IMR-90 (cell line): ENCODE measurements at regions of chr5 and their contacts with region 1.

Region 1: DNA sequence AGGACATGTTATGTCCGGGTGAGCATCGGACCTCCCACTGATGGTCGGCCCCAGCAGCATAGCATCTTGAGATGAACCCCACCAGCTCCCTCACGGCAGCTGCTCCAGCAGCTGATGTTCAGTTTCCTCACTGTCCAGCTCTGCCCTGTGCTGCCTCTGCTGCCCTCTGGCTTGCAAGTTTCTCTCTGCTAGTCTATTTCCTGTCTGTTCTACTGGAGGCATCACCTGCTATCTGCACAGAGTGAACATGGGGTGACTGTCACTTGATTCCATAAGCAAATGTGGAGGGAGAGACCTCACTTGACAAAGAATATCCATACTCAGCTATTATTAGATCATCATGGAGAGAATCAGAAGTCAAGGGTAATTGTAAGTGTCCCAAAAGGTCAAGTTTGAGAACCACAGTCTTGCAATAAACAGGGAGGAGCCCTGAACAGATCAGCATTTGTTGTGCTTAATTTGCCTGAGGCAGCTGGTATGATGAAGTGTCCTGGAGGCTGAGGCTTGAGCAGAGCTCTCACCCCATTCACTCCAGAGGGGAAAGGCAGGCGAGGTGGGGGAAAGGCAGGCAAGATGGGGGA is 702.8 kb downstream of the SEMA5A start:
- DNase-seq: peak; percentile 60
- ATAC-seq: peak; percentile 73
- H3K4me3 ChIP-seq: no peak overlapping the region
- H3K27ac ChIP-seq: peak overlapping the region; percentile 31; the same call in 1 of the 2 replicates
- H3K4me1 ChIP-seq: peaks cover 18% of the 10 kb centered on the region
- H3K27me3 ChIP-seq: no peaks in the 10 kb centered on the region
- CTCF ChIP-seq: peak; percentile 61
- POLR2A ChIP-seq: no peak
- RAD21 ChIP-seq: peak; percentile 63

Region 2: GRCh38 chr5:7927466-7928375 is 915.3 kb before region 1 on chr5:
- CTCF ChIA-PET with region 1: no interaction called
- POLR2A ChIA-PET with region 1: no interaction called
- dilution Hi-C with region 1: no loop called
- in situ Hi-C with region 1: no loop called
- intact Hi-C with region 1: loop called (anchors 10 kb)
- DNase-seq: peak; percentile 64
- ATAC-seq: peak; percentile 71
- H3K4me3 ChIP-seq: no peak overlapping the region
- H3K27ac ChIP-seq: no peak overlapping the region
- H3K4me1 ChIP-seq: peaks cover 2% of the 10 kb centered on the region
- H3K27me3 ChIP-seq: no peaks in the 10 kb centered on the region
- CTCF ChIP-seq: peak; percentile 74
- POLR2A ChIP-seq: 0 out of 2 replicates have a peak, but pooled peaks have one; percentile 41
- RAD21 ChIP-seq: peak; percentile 86

Region 3: DNA sequence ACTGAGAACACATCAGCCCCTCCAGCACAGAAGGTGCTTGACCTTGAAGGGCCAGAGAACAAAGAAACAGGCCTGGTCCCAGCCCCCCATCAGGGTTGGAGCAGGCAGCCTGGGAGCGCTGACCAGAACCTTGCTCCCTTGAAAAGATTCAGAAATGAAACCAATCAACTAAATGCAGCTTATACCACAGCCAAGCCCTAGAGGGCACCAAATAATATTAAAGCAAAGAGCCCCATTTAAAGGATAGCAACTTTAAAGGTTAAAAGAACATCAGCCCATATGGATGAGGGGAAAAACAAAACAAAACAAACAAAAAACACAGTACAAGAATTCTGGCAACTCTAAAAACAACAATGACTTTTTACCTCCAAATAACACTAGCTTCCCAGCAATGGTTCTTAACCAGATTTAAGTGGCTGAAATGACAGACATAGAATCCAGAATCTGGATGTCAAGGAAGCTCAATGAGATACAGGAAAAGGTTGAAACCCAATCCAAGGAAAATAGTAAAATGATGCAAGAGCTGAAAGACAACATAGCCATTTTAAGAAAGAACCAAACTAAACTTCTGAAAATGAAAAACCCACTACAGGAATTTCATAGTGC is 502.2 kb before region 1 on chr5:
- CTCF ChIA-PET with region 1: no interaction called
- POLR2A ChIA-PET with region 1: no interaction called
- dilution Hi-C with region 1: no loop called
- in situ Hi-C with region 1: no loop called
- intact Hi-C with region 1: loop called (anchors 10 kb)
- DNase-seq: peak; percentile 23
- ATAC-seq: peak; percentile 94
- H3K4me3 ChIP-seq: no peak overlapping the region
- H3K27ac ChIP-seq: no peak overlapping the region
- H3K4me1 ChIP-seq: no peaks in the 10 kb centered on the region
- H3K27me3 ChIP-seq: no peaks in the 10 kb centered on the region; the same call in 1 of the 2 replicates
- CTCF ChIP-seq: peak; percentile 62
- POLR2A ChIP-seq: no peak
- RAD21 ChIP-seq: peak; percentile 58

Region 4: DNA sequence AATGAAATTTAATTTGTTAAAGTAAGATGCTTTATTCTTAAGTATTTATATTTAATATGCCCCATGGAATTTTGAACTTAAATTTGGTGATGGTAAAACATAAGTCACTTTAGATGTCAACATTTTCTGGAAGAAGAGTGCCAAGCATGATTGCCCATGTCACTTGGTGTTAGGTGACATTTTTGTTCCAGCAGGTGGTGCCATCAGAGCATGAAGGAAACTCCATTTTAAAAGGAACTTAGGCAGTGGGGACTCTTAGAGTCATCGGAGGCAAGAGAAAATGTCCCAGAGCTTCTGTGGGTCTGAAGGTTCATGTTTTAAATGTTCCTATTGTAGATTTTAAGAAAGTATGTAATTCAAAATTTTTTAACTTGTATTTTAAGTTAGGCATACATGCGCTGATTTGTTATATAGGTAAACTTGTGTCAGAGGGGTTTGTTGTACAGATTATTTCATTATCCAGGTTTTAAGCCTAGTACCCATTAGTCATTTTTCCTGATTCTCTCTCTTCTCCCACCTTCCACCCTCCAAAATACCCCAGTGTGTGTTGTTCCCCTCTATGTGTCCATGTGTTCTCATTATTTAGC is 86.5 kb before region 1 on chr5:
- CTCF ChIA-PET with region 1: interaction called, 10 read pairs
- POLR2A ChIA-PET with region 1: no interaction called
- dilution Hi-C with region 1: no loop called
- in situ Hi-C with region 1: no loop called
- intact Hi-C with region 1: no loop called
- DNase-seq: peak; percentile 60
- ATAC-seq: peak; percentile 63; the same call in 1 of the 2 replicates
- H3K4me3 ChIP-seq: no peak overlapping the region
- H3K27ac ChIP-seq: no peak overlapping the region
- H3K4me1 ChIP-seq: peaks cover 2% of the 10 kb centered on the region; the same call in 1 of the 2 replicates
- H3K27me3 ChIP-seq: no peaks in the 10 kb centered on the region
- CTCF ChIP-seq: peak; percentile 59
- POLR2A ChIP-seq: no peak
- RAD21 ChIP-seq: peak; percentile 81

Region 5: GRCh38 chr5:8813180-8813579 is 29.9 kb before region 1 on chr5:
- CTCF ChIA-PET with region 1: no interaction called
- POLR2A ChIA-PET with region 1: no interaction called
- dilution Hi-C with region 1: no loop called
- in situ Hi-C with region 1: no loop called
- intact Hi-C with region 1: loop called (anchors 1 kb)
- DNase-seq: no peak
- ATAC-seq: no peak
- H3K4me3 ChIP-seq: no peak overlapping the region
- H3K27ac ChIP-seq: no peak overlapping the region
- H3K4me1 ChIP-seq: no peaks in the 10 kb centered on the region
- H3K27me3 ChIP-seq: no peaks in the 10 kb centered on the region
- CTCF ChIP-seq: no peak
- POLR2A ChIP-seq: no peak
- RAD21 ChIP-seq: no peak

Region 6: DNA sequence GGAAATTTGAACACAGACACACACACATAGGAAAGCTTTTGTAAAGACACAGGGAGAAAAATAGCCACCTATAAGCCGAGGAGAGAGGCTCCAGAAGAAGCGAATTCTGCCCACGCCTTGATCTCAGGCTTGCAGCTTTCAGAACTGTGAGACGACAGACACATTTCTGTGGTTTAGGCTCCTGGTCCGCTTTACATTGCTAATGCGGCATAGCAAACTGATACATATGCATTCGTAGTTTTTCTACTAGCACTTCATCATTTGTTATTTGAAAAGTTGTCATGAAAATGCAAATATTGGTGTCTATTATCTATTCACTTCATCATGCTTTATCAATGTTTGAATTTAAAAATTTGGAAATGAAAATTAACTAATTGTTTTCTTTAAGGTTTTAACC is 27.9 kb after region 1 on chr5:
- CTCF ChIA-PET with region 1: no interaction called
- POLR2A ChIA-PET with region 1: no interaction called
- dilution Hi-C with region 1: no loop called
- in situ Hi-C with region 1: no loop called
- intact Hi-C with region 1: no loop called
- DNase-seq: no peak
- ATAC-seq: no peak
- H3K4me3 ChIP-seq: no peak overlapping the region
- H3K27ac ChIP-seq: no peak overlapping the region
- H3K4me1 ChIP-seq: no peaks in the 10 kb centered on the region
- H3K27me3 ChIP-seq: no peaks in the 10 kb centered on the region
- CTCF ChIP-seq: no peak
- POLR2A ChIP-seq: no peak
- RAD21 ChIP-seq: no peak

Region 7: DNA sequence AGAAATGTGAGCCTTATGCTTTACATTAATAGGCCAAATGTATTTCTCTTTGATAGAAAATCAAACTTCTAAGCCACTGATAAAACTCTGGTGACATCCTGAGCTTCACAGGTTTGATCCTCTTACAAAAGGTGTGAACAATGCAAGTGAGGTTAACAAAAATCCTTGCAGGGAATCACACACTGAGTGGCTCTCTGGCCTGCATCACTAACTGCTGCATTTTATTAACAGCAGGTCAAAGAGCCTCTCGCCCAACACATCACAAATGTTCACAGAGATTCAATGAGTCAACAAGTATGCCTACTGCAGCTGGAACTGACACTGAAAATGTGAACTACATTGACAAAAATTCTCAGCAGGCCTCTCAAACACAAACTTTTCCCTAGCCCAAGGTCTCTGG is 580.5 kb after region 1 on chr5:
- CTCF ChIA-PET with region 1: no interaction called
- POLR2A ChIA-PET with region 1: no interaction called
- dilution Hi-C with region 1: no loop called
- in situ Hi-C with region 1: no loop called
- intact Hi-C with region 1: no loop called
- DNase-seq: peak; percentile 69
- ATAC-seq: peak; percentile 81
- H3K4me3 ChIP-seq: no peak overlapping the region
- H3K27ac ChIP-seq: no peak overlapping the region
- H3K4me1 ChIP-seq: peaks cover 7% of the 10 kb centered on the region
- H3K27me3 ChIP-seq: no peaks in the 10 kb centered on the region
- CTCF ChIP-seq: no peak
- POLR2A ChIP-seq: no peak
- RAD21 ChIP-seq: no peak